ENCODE measurements at regions of chr3 and their contacts with region 1.

Region 1: DNA sequence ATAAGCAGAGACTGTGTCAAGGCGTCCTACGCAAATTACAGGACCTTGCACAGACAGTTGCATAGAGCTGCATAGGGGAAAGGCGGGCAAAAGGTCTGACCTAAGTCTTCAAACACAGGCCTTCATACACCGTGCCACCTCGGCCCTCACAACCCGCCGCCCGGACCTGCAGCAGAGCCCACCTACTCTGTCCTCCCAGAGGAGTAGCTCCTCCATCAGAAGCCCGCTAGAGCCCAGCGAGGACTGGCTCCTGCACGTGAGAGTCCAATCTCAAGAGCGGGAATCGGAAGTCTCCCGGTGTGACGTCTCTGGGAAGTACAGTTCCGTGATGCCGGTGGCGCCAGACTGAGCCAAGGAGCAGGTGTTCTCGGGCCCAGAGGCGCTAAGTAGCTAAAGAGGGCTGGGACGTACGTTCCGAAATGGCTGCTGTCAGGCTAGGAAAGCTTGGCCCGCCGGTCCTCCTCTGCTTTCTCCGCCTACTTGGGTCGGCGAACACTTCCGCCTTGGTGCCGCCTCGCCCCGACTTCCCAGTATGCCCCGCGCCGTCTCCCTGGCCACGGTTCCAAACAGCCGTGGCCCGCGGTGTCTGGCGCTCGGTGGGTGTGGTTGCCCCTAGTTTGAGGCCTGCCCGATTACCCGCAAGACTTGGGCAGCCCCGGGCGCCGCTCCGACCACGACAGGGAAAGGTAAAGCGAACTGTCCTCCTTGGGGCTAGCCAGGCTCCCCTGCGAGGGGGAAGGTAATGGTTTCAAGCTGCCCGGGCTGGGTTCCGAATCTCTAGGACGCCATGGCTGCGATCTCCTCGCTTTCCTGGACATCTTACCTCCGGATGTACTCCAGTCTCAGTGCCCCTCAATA is at the starts of genes ASTE1 and NEK11:
- DNase-seq: peak; percentile 75 to 92
- H3K4me3 ChIP-seq: peak within 1 kb of the TSS; percentile 52
- H3K4me1 ChIP-seq: peaks cover 19% of the 10 kb centered on the region
- H3K27me3 ChIP-seq: no peaks in the 10 kb centered on the region

Region 2: GRCh38 chr3:130950641-130951040 is 75.9 kb before region 1 on chr3:
- in situ Hi-C with region 1: no loop called
- DNase-seq: no peak
- H3K4me3 ChIP-seq: no peak overlapping the region
- H3K4me1 ChIP-seq: peaks cover 26% of the 10 kb centered on the region
- H3K27me3 ChIP-seq: no peaks in the 10 kb centered on the region

Region 3: DNA sequence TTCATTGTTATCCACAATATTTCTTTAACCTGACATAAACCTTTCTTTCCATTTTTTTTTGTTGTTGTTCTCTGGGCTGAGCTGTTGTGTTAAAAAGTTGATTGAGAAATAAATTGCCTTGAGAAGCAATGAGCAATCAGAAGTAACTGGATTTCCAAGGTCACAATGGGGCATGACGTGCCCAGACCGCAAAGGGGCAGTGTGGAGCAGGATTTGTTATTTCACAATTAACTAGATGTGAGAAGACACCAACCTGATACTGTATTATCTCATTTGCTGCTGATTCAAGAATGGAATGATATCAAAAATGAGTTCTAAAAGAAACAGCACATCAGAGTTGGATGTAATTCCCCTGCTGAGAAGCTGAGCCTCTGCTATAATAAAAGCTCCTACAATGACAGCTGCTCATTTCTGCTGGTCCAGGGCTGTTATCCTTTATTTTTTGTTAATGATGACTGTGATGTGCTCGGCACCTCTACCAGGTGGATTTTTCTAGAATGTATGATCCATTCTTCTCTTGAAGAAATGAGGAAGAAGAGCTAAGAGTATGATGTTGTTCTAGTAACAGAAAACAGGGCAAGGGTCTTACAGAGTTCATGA is 980.2 kb after region 1 on chr3:
- in situ Hi-C with region 1: loop called (anchors 25 kb)
- DNase-seq: peak; percentile 40 to 67
- H3K4me3 ChIP-seq: no peak overlapping the region
- H3K4me1 ChIP-seq: peaks cover 5% of the 10 kb centered on the region
- H3K27me3 ChIP-seq: no peaks in the 10 kb centered on the region

Region 4: GRCh38 chr3:132180337-132180791 is 1153.8 kb after region 1 on chr3:
- in situ Hi-C with region 1: loop called (anchors 25 kb)
- DNase-seq: peak; percentile 10 to 48
- H3K4me3 ChIP-seq: no peak overlapping the region
- H3K4me1 ChIP-seq: no peaks in the 10 kb centered on the region
- H3K27me3 ChIP-seq: peaks cover 4% of the 10 kb centered on the region